SK-N-SH (cell line): ENCODE measurements at regions of chr16 and their contacts with region 1.

Region 1: GRCh38 chr16:49407873-49408550 is 34.4 kb downstream of the C16orf78 start:
- DNase-seq: peak; percentile 88
- H3K4me3 ChIP-seq: no peak overlapping the region
- H3K27ac ChIP-seq: no peak overlapping the region
- H3K4me1 ChIP-seq: peaks cover 0 to 3% of the 10 kb centered on the region in 2 experiments; a peak in 1 of 4 replicates
- H3K27me3 ChIP-seq: no peaks in the 10 kb centered on the region
- CTCF ChIP-seq: peak; percentile 76
- EP300 ChIP-seq: no peak
- RAD21 ChIP-seq: peak; percentile 99

Region 2: DNA sequence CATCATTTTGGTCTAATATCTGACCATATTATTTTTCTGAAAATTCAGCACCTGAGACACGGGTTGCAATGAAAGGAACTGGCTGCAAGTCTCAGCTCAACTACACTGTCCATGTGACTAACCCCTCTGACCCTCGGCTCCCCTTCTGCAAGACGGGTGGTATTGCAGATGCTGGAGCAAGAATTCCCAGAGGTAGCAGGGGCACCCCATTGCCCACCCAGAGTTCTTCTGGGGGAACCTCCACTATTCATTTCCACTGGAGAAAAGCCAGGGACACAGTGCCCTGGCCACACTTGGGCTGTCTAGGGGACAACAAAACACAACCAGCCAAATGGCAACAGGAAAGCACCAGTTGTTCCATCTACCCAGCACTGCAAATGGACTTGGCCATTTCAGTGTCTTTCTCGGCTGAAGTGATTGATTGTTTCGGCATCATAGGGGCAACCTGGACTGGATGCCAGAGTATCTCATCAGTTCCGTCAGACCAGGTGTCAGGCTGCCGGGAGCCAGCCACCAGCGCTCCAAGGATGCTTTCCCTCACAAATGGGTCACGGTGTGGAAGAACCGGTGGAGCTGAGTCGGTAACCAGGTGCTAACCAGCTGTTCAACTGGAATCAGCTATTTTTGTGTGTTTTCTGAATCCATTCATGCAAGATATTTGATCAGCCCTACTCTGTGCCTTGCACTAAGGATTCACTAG is 23.7 kb after region 1 on chr16:
- CTCF ChIA-PET with region 1: interaction called, 27 read pairs
- POLR2A ChIA-PET with region 1: no interaction called
- DNase-seq: no peak
- H3K4me3 ChIP-seq: no peak overlapping the region
- H3K27ac ChIP-seq: no peak overlapping the region
- H3K4me1 ChIP-seq: no peaks in the 10 kb centered on the region; a peak in 1 of 4 replicates
- H3K27me3 ChIP-seq: no peaks in the 10 kb centered on the region
- CTCF ChIP-seq: no peak
- EP300 ChIP-seq: no peak
- RAD21 ChIP-seq: no peak

Region 3: GRCh38 chr16:49876716-49877129 is 468.7 kb after region 1 on chr16:
- CTCF ChIA-PET with region 1: interaction called, 19 read pairs
- POLR2A ChIA-PET with region 1: no interaction called
- DNase-seq: peak; percentile 92
- H3K4me3 ChIP-seq: peak overlapping the region in 1 of 2 experiments; percentile 51; a peak in 1 of 4 replicates
- H3K27ac ChIP-seq: no peak overlapping the region
- H3K4me1 ChIP-seq: no peaks in the 10 kb centered on the region
- H3K27me3 ChIP-seq: no peaks in the 10 kb centered on the region; the same call in none of the 2 replicates
- CTCF ChIP-seq: peak; percentile 64
- EP300 ChIP-seq: no peak
- RAD21 ChIP-seq: peak; percentile 43

Region 4: DNA sequence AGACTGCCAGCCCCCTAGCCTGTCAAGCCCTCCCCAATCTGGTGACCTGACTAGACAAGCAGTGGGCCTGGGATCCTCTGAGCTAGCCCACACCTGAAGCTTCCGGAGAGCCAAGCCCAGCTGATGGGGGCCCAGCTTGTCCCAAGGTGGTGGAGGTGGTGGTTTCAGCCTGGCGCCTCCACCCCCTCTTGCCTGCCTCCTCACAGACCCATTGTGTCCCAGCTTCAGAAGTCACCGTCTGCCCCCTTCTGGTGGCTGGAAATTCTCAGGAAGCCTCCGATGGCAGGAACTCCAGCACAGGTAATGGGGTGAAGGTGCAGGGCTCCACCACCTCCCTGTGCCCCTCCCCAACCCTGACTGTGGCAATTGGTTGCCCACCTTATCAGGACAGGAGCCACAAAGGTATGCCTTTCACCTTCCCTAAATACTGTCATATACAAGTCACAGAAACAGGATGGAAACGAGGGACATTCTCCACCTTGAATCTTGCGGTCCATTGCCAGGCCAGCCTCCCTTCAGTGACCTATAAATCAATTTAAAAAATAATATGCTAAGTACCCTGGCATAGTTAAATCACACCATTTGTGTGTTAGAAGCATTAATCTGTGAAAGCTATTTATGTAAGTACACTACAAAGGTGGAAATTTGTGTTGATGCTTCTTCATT is 513.9 kb after region 1 on chr16:
- CTCF ChIA-PET with region 1: interaction called, 102 read pairs
- POLR2A ChIA-PET with region 1: no interaction called
- DNase-seq: peak; percentile 86
- H3K4me3 ChIP-seq: no peak overlapping the region
- H3K27ac ChIP-seq: no peak overlapping the region
- H3K4me1 ChIP-seq: peaks cover 0 to 3% of the 10 kb centered on the region in 2 experiments; a peak in 1 of 4 replicates
- H3K27me3 ChIP-seq: no peaks in the 10 kb centered on the region
- CTCF ChIP-seq: peak; percentile 65
- EP300 ChIP-seq: no peak
- RAD21 ChIP-seq: peak; percentile 92